Activated naive CD4-positive, alpha-beta T cell treated with anti-CD3 and anti-CD28 coated beads for 36 hours (primary cell): ENCODE measurements at regions of chr12 and their contacts with region 1.

Region 1: DNA sequence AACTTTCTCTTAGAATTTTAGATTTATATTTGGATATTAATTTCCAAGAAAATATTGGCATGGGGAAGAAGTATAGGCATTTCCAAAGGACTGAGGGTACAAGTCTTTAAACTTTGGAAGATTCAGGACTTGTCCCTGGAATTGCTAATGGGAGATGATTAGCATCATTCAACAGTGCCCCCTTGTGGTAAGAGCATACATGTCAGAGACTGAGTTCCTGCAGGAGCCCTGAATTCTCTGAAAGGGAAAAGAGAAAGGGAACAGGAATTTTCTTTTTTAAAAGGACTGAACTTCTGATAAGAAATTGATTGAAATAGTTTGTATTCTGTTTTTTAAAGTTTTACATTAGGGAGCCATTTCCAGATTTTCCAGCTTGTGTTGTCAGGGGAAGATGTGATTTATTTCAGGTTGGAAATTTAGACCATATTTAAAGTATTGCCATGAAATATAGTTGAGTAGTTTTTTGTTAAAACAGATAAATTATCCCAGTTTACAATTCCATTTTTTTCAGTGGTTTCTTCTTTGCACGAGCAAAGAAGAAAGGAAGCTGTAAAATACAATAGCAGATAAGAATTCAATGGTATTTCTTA is 44.0 kb upstream of the REP15 start:
- DNase-seq: peak; percentile 44
- H3K4me3 Mint-ChIP-seq: no peak overlapping the region
- H3K27ac Mint-ChIP-seq: no peak overlapping the region
- H3K4me1 Mint-ChIP-seq: peaks cover 4% of the 10 kb centered on the region
- H3K27me3 Mint-ChIP-seq: no peaks in the 10 kb centered on the region

Region 2: DNA sequence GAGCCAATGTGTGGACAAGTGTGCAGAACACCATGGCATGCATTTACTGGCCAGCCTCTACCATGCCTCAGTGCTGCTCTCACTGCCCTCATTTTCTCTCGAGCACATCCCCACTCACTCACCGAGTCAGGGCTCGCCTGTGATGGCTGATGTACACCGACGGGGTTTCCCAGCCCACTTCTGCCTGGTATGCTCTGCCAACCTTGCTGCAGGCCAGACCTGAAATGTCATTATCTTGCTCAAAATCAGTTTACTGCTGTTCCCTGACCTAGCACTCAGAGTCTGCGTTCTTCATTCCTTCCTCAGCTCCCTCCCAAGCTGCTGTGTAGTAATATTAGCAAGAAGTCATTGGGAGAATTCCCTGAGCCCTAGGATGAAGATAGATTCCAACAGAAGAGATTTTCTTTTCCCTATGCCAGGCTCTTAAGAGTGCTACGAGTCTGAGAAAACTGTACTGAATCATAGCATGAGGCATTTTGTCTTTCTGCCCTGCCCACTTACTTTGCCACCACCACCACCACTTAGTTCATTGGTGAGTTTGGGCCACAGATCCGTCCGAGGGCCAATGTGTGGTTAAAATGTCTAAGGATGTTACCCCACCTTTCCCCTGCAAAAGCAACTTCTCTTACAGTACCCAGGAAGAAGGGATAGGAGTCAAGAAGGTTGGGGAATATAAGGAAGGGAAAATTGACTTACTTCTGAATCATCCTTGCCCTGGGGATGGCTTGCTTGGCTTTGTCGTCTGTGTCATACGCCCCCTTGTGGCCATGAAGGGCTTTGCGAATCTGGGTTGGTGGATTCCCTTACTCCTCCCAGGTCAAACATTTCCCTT is 268.6 kb before region 1 on chr12:
- CTCF ChIA-PET with region 1: interaction called, 3 read pairs
- intact Hi-C with region 1: loop called (anchors 2 kb)
- DNase-seq: peak; percentile 84
- H3K4me3 Mint-ChIP-seq: no peak overlapping the region
- H3K27ac Mint-ChIP-seq: no peak overlapping the region
- H3K4me1 Mint-ChIP-seq: no peaks in the 10 kb centered on the region
- H3K27me3 Mint-ChIP-seq: peaks cover 4% of the 10 kb centered on the region

Region 3: DNA sequence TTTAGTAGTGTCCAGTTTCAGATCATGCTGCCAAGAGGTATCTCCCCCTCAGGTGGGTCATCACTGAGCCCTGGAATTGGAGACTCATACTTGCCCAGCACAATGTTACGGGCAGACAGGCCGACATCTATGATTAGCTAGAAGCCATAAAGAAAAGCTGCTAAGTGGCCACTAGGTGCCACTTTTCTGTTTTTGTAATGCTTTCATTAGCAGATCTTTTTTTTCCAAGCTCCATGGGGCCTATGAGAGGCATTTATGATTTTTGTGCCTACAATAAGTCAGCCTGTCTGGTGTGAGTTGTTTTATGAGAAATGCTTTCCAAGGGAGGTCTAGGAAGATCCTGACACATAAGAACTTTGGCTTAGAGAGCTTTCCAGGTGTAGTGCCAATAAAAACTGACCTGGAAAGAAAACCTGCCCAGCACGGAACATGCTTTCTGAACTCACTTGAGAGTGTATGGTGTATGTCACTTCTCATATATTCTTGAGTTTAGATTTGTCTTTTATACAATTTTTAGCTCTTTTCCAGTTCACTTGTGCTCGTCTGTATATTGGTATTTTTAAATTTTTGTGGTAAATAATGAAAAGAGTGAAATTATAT is 227.5 kb before region 1 on chr12:
- CTCF ChIA-PET with region 1: interaction called, 9 read pairs
- intact Hi-C with region 1: loop called (anchors 1 kb)
- DNase-seq: no peak
- H3K4me3 Mint-ChIP-seq: no peak overlapping the region
- H3K27ac Mint-ChIP-seq: no peak overlapping the region
- H3K4me1 Mint-ChIP-seq: no peaks in the 10 kb centered on the region
- H3K27me3 Mint-ChIP-seq: no peaks in the 10 kb centered on the region

Region 4: DNA sequence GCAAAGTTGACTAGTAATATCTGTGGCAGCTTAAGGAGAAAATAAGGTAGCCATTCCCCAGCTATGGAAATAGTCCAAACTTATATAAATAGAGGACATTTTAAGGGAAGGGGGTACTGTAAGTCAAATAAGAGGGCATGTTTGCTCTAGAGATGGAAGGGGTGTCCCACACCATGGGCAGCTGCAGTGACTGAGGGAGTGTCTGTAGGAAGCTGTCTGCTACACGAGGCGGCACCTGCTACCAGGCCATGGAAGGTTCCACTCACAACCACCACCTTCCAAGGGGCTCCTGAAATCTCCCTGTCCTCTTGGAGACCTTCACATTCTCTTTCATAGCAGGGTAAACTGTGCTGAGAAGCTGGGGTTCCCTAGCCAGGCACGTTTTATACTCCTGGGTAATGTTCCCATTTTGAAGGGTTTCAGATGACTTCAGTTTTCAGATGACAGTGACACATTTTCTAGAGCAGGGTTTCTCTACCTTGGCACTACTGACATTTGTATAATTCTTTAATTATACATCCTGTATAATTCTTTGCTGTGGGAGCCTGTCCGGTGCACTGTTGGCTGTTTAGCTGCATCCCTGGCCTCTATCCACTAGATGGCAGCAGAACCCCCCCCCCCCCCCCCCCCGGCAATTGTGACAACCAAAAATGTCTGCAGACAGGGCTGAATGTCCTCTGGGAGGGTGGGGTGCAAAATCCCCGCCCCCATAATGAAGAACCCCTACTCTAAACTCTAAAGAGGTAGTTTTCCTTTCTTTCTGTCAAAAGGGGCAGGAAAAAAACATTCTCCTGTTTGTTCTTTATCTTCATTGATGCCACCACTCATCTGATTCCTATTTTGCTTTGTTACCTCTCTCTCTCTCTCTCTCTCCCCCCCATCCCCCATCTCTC is 217.3 kb before region 1 on chr12:
- CTCF ChIA-PET with region 1: interaction called, 29 read pairs
- intact Hi-C with region 1: loop called (anchors 1 kb)
- DNase-seq: peak; percentile 37
- H3K4me3 Mint-ChIP-seq: no peak overlapping the region
- H3K27ac Mint-ChIP-seq: no peak overlapping the region
- H3K4me1 Mint-ChIP-seq: peaks cover 17% of the 10 kb centered on the region
- H3K27me3 Mint-ChIP-seq: peaks cover 2% of the 10 kb centered on the region

Region 5: GRCh38 chr12:27610374-27610773 is 41.9 kb before region 1 on chr12:
- CTCF ChIA-PET with region 1: no interaction called
- intact Hi-C with region 1: no loop called
- DNase-seq: no peak
- H3K4me3 Mint-ChIP-seq: no peak overlapping the region
- H3K27ac Mint-ChIP-seq: no peak overlapping the region
- H3K4me1 Mint-ChIP-seq: no peaks in the 10 kb centered on the region
- H3K27me3 Mint-ChIP-seq: no peaks in the 10 kb centered on the region

Region 6: GRCh38 chr12:27667540-27667939 is 15.3 kb after region 1 on chr12:
- CTCF ChIA-PET with region 1: interaction called, 13 read pairs
- intact Hi-C with region 1: no loop called
- DNase-seq: no peak
- H3K4me3 Mint-ChIP-seq: no peak overlapping the region
- H3K27ac Mint-ChIP-seq: no peak overlapping the region
- H3K4me1 Mint-ChIP-seq: no peaks in the 10 kb centered on the region
- H3K27me3 Mint-ChIP-seq: no peaks in the 10 kb centered on the region